CD4-positive, alpha-beta memory T cell (primary cell): ENCODE measurements at regions of chr9 and their contacts with region 1.

Region 1: GRCh38 chr9:97921959-97922724 is at the start of gene TRMO:
- DNase-seq: peak; percentile 97 to 100 (median 98)
- H3K4me3 ChIP-seq: peak within 1 kb of the TSS; percentile 64 to 82
- H3K4me3 Mint-ChIP-seq: peak within 1 kb of the TSS; percentile 85 to 100 (median 94)
- H3K27ac ChIP-seq: peak within 1 kb of the TSS; percentile 90
- H3K27ac Mint-ChIP-seq: peak within 1 kb of the TSS; percentile 91 to 100 (median 100)
- H3K4me1 ChIP-seq: peaks cover 53% of the 10 kb centered on the region
- H3K4me1 Mint-ChIP-seq: peaks cover 26 to 54% (median 41%) of the 10 kb centered on the region in 4 donors
- H3K27me3 ChIP-seq: no peaks in the 10 kb centered on the region
- H3K27me3 Mint-ChIP-seq: peaks cover 0 to 1% of the 10 kb centered on the region in 2 donors
- total RNA-seq, gene TRMO: 51.6 to 59.5 TPM

Region 2: GRCh38 chr9:97487107-97487506 is 435.0 kb before region 1 on chr9:
- CTCF ChIA-PET with region 1: no interaction called
- POLR2A ChIA-PET with region 1: no interaction called
- intact Hi-C with region 1: no loop called
- DNase-seq: no peak
- H3K4me3 ChIP-seq: no peak overlapping the region
- H3K4me3 Mint-ChIP-seq: no peak overlapping the region
- H3K27ac ChIP-seq: no peak overlapping the region
- H3K27ac Mint-ChIP-seq: no peak overlapping the region
- H3K4me1 ChIP-seq: no peaks in the 10 kb centered on the region
- H3K4me1 Mint-ChIP-seq: peaks cover 0 to 2% (median 0%) of the 10 kb centered on the region in 4 donors
- H3K27me3 ChIP-seq: no peaks in the 10 kb centered on the region
- H3K27me3 Mint-ChIP-seq: no peaks in the 10 kb centered on the region

Region 3: GRCh38 chr9:97632985-97633858 is 288.9 kb before region 1 on chr9 and contains the starts of genes NCBP1 and TSTD2:
- CTCF ChIA-PET with region 1: no interaction called
- POLR2A ChIA-PET with region 1: interaction called, 29 read pairs
- intact Hi-C with region 1: loop called (anchors 1 kb)
- DNase-seq: peak; percentile 96 to 97 (median 97)
- H3K4me3 ChIP-seq: peak within 1 kb of the TSS; percentile 80 to 87
- H3K4me3 Mint-ChIP-seq: peak within 1 kb of the TSS; percentile 96 to 100 (median 98)
- H3K27ac ChIP-seq: peak within 1 kb of the TSS; percentile 92
- H3K27ac Mint-ChIP-seq: peak within 1 kb of the TSS; percentile 96 to 100 (median 100)
- H3K4me1 ChIP-seq: peaks cover 52% of the 10 kb centered on the region
- H3K4me1 Mint-ChIP-seq: peaks cover 37 to 65% (median 51%) of the 10 kb centered on the region in 4 donors
- H3K27me3 ChIP-seq: no peaks in the 10 kb centered on the region
- H3K27me3 Mint-ChIP-seq: no peaks in the 10 kb centered on the region
- total RNA-seq, gene NCBP1: 40.7 to 50.8 TPM
- total RNA-seq, gene TSTD2: 17.8 to 18.4 TPM

Region 4: GRCh38 chr9:97740848-97741821 is 181.0 kb before region 1 on chr9:
- CTCF ChIA-PET with region 1: no interaction called
- POLR2A ChIA-PET with region 1: no interaction called
- intact Hi-C with region 1: no loop called
- DNase-seq: peak in 4 of 5 donors; percentile 12 to 17 (median 15)
- H3K4me3 ChIP-seq: no peak overlapping the region
- H3K4me3 Mint-ChIP-seq: peak overlapping the region; percentile 13 to 64 (median 52)
- H3K27ac ChIP-seq: no peak overlapping the region
- H3K27ac Mint-ChIP-seq: no peak overlapping the region
- H3K4me1 ChIP-seq: peaks cover 11% of the 10 kb centered on the region
- H3K4me1 Mint-ChIP-seq: peaks cover 1 to 11% (median 7%) of the 10 kb centered on the region in 4 donors
- H3K27me3 ChIP-seq: peaks cover 25% of the 10 kb centered on the region
- H3K27me3 Mint-ChIP-seq: peaks cover 36 to 56% of the 10 kb centered on the region in 2 donors

Region 5: DNA sequence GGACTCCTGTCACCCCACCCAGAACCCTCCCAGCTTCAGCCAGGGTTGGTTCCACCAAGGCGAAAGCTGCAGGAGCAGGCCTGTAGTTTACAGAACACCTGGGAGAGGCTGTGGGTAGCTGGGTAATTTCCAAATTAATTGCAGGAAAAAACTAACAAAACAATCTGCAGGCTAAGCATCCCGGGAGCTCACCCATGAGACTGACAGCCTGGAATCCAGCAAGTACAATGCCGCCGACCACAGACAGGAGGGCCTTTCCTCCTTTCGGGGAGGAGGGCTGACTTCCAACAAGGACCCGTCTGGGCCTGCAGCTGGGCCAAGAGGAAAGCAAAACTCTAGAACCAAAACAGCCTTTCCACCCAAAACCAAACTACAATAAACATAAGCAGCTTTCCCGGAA is 58.8 kb before region 1 on chr9:
- CTCF ChIA-PET with region 1: no interaction called
- POLR2A ChIA-PET with region 1: no interaction called
- intact Hi-C with region 1: no loop called
- DNase-seq: no peak
- H3K4me3 ChIP-seq: no peak overlapping the region
- H3K4me3 Mint-ChIP-seq: no peak overlapping the region
- H3K27ac ChIP-seq: no peak overlapping the region
- H3K27ac Mint-ChIP-seq: no peak overlapping the region
- H3K4me1 ChIP-seq: peaks cover 1% of the 10 kb centered on the region
- H3K4me1 Mint-ChIP-seq: peaks cover under 1% of the 10 kb centered on the region in 4 donors
- H3K27me3 ChIP-seq: peaks cover 11% of the 10 kb centered on the region
- H3K27me3 Mint-ChIP-seq: peaks cover 30 to 55% of the 10 kb centered on the region in 2 donors

Region 6: DNA sequence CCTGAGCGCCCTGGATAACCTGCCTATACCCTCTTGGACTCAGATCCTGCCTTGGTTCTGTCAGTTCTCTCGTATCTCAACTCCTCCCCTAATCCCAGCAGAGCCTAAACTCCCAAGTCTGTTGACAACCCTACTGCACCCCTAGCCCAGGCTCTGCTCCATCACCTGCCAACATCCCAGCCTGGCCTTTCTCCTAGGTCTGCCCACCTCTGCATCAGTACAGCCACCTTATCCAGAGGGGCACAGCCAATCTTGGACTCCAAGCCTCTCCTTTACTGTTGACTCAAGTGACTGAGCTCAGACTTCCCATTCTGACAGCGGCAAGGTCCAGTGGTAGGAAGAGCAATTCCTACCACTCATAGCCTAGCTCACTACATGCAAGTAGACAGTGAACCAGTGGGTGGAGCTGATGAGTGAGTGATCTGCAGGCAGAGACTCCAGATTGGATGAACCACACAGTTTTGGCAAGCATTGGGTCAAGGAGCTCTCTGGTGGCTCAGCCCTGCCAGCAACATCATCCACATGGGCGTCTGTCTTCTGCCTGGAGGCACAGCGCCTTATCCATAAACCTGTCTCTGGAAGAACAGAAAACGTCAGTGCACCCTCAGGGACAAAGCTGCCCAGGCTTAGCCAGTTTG is 26.3 kb before region 1 on chr9:
- CTCF ChIA-PET with region 1: interaction called, 174 read pairs
- POLR2A ChIA-PET with region 1: interaction called, 746 read pairs
- intact Hi-C with region 1: loop called (anchors 1 kb)
- DNase-seq: no peak
- H3K4me3 ChIP-seq: no peak overlapping the region
- H3K4me3 Mint-ChIP-seq: no peak overlapping the region
- H3K27ac ChIP-seq: no peak overlapping the region
- H3K27ac Mint-ChIP-seq: peak overlapping the region in 4 of 7 donors; percentile 6 to 77 (median 24)
- H3K4me1 ChIP-seq: peaks cover 8% of the 10 kb centered on the region
- H3K4me1 Mint-ChIP-seq: peaks cover 5 to 23% (median 8%) of the 10 kb centered on the region in 4 donors
- H3K27me3 ChIP-seq: no peaks in the 10 kb centered on the region
- H3K27me3 Mint-ChIP-seq: no peaks in the 10 kb centered on the region

Region 7: GRCh38 chr9:97943308-97943855 is 21.2 kb after region 1 on chr9:
- CTCF ChIA-PET with region 1: interaction called, 61 read pairs
- POLR2A ChIA-PET with region 1: interaction called, 22 read pairs
- intact Hi-C with region 1: loop called (anchors 1 kb)
- DNase-seq: no peak
- H3K4me3 ChIP-seq: no peak overlapping the region
- H3K4me3 Mint-ChIP-seq: no peak overlapping the region
- H3K27ac ChIP-seq: no peak overlapping the region
- H3K27ac Mint-ChIP-seq: no peak overlapping the region
- H3K4me1 ChIP-seq: peaks cover 12% of the 10 kb centered on the region
- H3K4me1 Mint-ChIP-seq: peaks cover 7 to 9% (median 8%) of the 10 kb centered on the region in 4 donors
- H3K27me3 ChIP-seq: no peaks in the 10 kb centered on the region
- H3K27me3 Mint-ChIP-seq: no peaks in the 10 kb centered on the region

Region 8: GRCh38 chr9:97993000-97993399 is 70.9 kb after region 1 on chr9:
- CTCF ChIA-PET with region 1: interaction called, 13 read pairs
- POLR2A ChIA-PET with region 1: interaction called, 176 read pairs
- intact Hi-C with region 1: no loop called
- DNase-seq: peak in 3 of 5 donors; percentile 14 to 38 (median 19)
- H3K4me3 ChIP-seq: no peak overlapping the region
- H3K4me3 Mint-ChIP-seq: peak overlapping the region in 6 of 8 donors; percentile 3 to 67 (median 38)
- H3K27ac ChIP-seq: no peak overlapping the region
- H3K27ac Mint-ChIP-seq: peak overlapping the region in 6 of 7 donors; percentile 17 to 81 (median 56)
- H3K4me1 ChIP-seq: peaks cover 60% of the 10 kb centered on the region
- H3K4me1 Mint-ChIP-seq: peaks cover 57 to 89% (median 71%) of the 10 kb centered on the region in 4 donors
- H3K27me3 ChIP-seq: no peaks in the 10 kb centered on the region
- H3K27me3 Mint-ChIP-seq: no peaks in the 10 kb centered on the region

Region 9: DNA sequence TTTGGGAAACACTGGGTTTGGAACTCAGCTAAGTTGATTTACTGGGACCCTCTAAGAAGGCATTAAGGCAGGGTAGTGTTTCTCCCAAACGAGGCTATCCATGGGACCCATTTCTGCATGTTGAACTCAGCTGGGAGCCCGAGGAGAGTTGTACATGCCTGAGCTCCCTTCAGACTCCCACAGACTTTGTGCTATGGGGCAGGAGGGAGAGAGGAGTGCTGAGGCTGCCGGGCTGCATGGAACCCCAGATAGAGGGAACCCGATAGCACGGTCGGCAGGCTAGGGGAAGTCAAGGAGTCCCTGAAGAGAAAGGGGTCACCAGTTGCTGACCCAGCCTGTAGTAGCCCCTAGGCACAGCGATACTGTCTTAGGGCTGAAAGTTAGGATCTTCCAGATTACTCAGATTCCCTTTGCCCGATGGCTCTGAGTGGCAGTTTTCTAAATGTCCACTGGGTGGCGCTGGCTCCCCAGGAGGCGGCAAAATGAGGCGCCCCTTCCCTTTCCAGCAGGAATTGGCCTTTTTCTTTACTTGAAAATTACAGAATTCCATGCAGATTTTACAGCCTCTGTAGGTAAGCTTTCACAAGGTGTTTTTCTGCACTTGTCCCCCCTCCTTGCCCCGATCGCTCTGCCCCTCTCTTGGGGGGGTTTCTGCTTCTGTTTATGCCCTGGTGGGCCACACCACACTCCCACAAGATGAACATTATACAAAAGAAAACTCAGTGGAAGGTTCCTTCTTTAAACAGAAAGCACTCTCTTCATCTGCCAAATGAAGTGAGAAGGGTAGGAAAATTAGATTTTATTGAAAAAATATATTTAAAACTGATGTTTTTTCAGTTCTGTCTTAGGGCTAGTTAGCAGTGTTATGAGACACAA is 152.2 kb after region 1 on chr9:
- CTCF ChIA-PET with region 1: interaction called, 3 read pairs
- POLR2A ChIA-PET with region 1: interaction called, 5 read pairs
- intact Hi-C with region 1: loop called (anchors 1 kb)
- DNase-seq: peak; percentile 60 to 72 (median 62)
- H3K4me3 ChIP-seq: no peak overlapping the region
- H3K4me3 Mint-ChIP-seq: peak overlapping the region; percentile 52 to 89 (median 71)
- H3K27ac ChIP-seq: peak overlapping the region; percentile 67
- H3K27ac Mint-ChIP-seq: peak overlapping the region; percentile 92 to 98 (median 96)
- H3K4me1 ChIP-seq: peaks cover 31% of the 10 kb centered on the region
- H3K4me1 Mint-ChIP-seq: peaks cover 24 to 43% (median 29%) of the 10 kb centered on the region in 4 donors
- H3K27me3 ChIP-seq: no peaks in the 10 kb centered on the region
- H3K27me3 Mint-ChIP-seq: no peaks in the 10 kb centered on the region

Region 10: GRCh38 chr9:98255578-98256296 is 333.6 kb after region 1 on chr9 and contains the start of gene TBC1D2:
- CTCF ChIA-PET with region 1: interaction called, 22 read pairs
- POLR2A ChIA-PET with region 1: interaction called, 90 read pairs
- intact Hi-C with region 1: loop called (anchors 1 kb)
- DNase-seq: peak; percentile 96 to 98 (median 97)
- H3K4me3 ChIP-seq: peak within 1 kb of the TSS; percentile 90 to 91
- H3K4me3 Mint-ChIP-seq: peak within 1 kb of the TSS; percentile 93 to 99 (median 97)
- H3K27ac ChIP-seq: peak within 1 kb of the TSS; percentile 82
- H3K27ac Mint-ChIP-seq: peak within 1 kb of the TSS; percentile 87 to 97 (median 95)
- H3K4me1 ChIP-seq: peaks cover 35% of the 10 kb centered on the region
- H3K4me1 Mint-ChIP-seq: peaks cover 23 to 50% (median 40%) of the 10 kb centered on the region in 4 donors
- H3K27me3 ChIP-seq: no peaks in the 10 kb centered on the region
- H3K27me3 Mint-ChIP-seq: no peaks in the 10 kb centered on the region
- total RNA-seq, gene TBC1D2: 11.2 to 11.4 TPM